ENCODE measurements at regions of chr19 and their contacts with region 1.

Region 1: DNA sequence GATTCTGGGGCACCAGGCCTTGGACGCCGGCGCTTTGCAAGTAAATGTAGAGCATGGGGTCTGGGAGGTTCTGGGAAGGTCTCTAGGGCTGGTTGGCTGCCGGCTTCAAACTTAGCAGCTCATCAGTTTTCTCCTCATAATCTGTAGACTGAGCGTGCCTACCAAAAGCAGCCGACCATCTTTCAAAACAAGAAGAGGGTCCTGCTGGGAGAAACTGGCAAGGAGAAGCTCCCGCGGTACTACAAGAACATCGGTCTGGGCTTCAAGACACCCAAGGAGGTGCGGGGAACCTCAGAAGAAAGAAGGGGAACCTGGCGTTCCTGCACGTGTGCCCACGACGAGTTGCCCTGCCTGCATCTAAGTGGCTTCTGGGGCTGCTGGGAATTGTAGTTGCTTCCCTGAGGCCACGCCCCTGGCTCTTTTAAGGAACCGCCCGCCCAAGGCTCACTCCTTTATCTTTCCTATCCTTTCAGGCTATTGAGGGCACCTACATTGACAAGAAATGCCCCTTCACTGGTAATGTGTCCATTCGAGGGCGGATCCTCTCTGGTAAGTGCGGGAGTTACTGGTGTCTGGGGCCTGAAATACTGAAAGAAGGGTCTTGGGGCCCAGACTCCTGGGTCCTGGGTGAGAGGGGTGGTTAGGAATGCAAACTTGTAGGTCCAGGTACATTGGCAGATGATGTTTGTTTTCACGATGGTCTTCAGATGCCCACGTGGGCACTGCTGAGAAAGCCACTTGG is 984 bp downstream of the RPS11 start:
- DNase-seq: no peak
- ATAC-seq: no peak
- H3K4me3 ChIP-seq: peak overlapping the region; percentile 77 to 85 (median 78)
- H3K27ac ChIP-seq: peak overlapping the region; percentile 81
- H3K4me1 ChIP-seq: peaks cover 39% of the 10 kb centered on the region
- H3K27me3 ChIP-seq: peaks cover 0 to 4% of the 10 kb centered on the region in 2 experiments; a peak in 1 of 5 replicates
- CTCF ChIP-seq: no peak
- EP300 ChIP-seq: no peak
- POLR2A ChIP-seq: peak; percentile 66 to 71; a peak in 3 of 4 replicates
- RAD21 ChIP-seq: no peak

Region 2: GRCh38 chr19:49451430-49452181 is 45.6 kb before region 1 on chr19 and contains the start of gene PIH1D1:
- CTCF ChIA-PET with region 1: no interaction called
- POLR2A ChIA-PET with region 1: interaction called, 22 read pairs
- in situ Hi-C with region 1: no loop called
- intact Hi-C with region 1: no loop called
- DNase-seq: peak; percentile 99
- ATAC-seq: peak; percentile 85
- H3K4me3 ChIP-seq: peak within 1 kb of the TSS; percentile 93 to 98 (median 95)
- H3K27ac ChIP-seq: peak within 1 kb of the TSS; percentile 99
- H3K4me1 ChIP-seq: peaks cover 35% of the 10 kb centered on the region
- H3K27me3 ChIP-seq: no peaks in the 10 kb centered on the region; a peak in 1 of 5 replicates
- CTCF ChIP-seq: peak; percentile 23; the same call in 1 of the 2 replicates
- EP300 ChIP-seq: no peak
- POLR2A ChIP-seq: peak; percentile 83 to 93
- RAD21 ChIP-seq: no peak
- total RNA-seq, gene PIH1D1: 94.9 and 110 TPM in 2 replicates

Region 3: GRCh38 chr19:49473868-49474544 is 23.2 kb before region 1 on chr19 and contains the start of gene FLT3LG:
- CTCF ChIA-PET with region 1: no interaction called
- POLR2A ChIA-PET with region 1: interaction called, 22 read pairs
- in situ Hi-C with region 1: no loop called
- intact Hi-C with region 1: no loop called
- DNase-seq: peak; percentile 46
- ATAC-seq: peak; percentile 70
- H3K4me3 ChIP-seq: peak within 1 kb of the TSS; percentile 78 to 99 (median 78)
- H3K27ac ChIP-seq: no peak within 1 kb of the TSS
- H3K4me1 ChIP-seq: peaks cover 34% of the 10 kb centered on the region
- H3K27me3 ChIP-seq: no peaks in the 10 kb centered on the region; a peak in 1 of 5 replicates
- CTCF ChIP-seq: peak; percentile 95
- EP300 ChIP-seq: 0 out of 4 replicates have a peak, but pooled peaks of 1 of the 2 experiments have one; percentile 5
- POLR2A ChIP-seq: 0 out of 4 replicates have a peak, but pooled peaks of 1 of the 2 experiments have one; percentile 30
- RAD21 ChIP-seq: peak; percentile 70
- total RNA-seq, gene FLT3LG: 0.58 and 1.5 TPM in 2 replicates

Region 4: GRCh38 chr19:49479975-49480628 is 17.1 kb before region 1 on chr19:
- CTCF ChIA-PET with region 1: no interaction called
- POLR2A ChIA-PET with region 1: interaction called, 22 read pairs
- in situ Hi-C with region 1: no loop called
- intact Hi-C with region 1: no loop called
- DNase-seq: no peak
- ATAC-seq: no peak
- H3K4me3 ChIP-seq: no peak overlapping the region; a peak in 1 of 6 replicates
- H3K27ac ChIP-seq: peak overlapping the region; percentile 21
- H3K4me1 ChIP-seq: peaks cover 38% of the 10 kb centered on the region
- H3K27me3 ChIP-seq: no peaks in the 10 kb centered on the region; a peak in 1 of 5 replicates
- CTCF ChIP-seq: no peak
- EP300 ChIP-seq: no peak
- POLR2A ChIP-seq: no peak
- RAD21 ChIP-seq: no peak

Measured in HepG2 (cell line).